WTC11 (cell line): ENCODE measurements at regions of chr3 and their contacts with region 1.

Region 1: DNA sequence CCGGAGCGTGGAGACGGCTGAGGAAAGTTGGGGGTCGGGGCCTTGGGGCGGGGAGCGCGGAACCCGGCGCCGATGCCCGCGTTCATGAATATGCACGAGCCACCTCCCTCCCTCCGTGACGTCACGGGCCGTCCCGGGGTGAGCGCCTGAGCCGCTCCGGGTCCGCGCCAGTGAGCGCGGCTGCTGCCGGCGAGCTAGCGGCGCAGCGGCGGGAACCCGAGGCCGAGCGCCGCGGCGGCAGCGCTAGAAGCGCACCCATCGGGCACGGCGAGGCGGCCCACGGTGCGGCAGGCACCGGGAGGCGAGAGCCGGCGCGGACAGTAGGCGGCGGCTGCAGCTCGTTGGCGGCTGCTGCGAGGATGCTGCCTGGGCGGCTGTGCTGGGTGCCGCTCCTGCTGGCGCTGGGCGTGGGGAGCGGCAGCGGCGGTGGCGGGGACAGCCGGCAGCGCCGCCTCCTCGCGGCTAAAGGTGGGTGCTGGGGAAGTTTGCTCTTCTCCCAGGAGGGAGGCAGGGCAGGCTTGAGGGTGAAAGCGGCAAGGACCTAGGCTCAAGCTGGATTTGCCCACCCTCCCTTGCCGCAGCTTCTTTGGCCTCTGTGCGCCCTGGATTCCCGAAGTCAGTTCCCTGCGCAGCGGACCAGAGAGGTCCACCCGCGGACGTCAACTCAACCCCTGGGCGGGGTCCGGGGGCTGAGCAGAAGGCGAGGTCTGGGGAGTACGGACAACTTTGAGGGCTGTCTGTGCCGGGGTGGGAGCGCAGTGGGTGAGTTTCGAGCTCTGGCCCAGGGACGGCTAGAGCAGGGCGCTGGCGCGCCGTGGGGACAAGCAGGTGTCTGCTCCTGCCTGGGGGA is at the start of gene CLSTN2:
- DNase-seq: peak; percentile 76
- ATAC-seq: peak; percentile 67
- H3K4me3 Mint-ChIP-seq: peak within 1 kb of the TSS; percentile 72
- H3K27ac Mint-ChIP-seq: no peak within 1 kb of the TSS
- H3K4me1 Mint-ChIP-seq: peaks cover 8% of the 10 kb centered on the region
- H3K27me3 Mint-ChIP-seq: peaks cover 53% of the 10 kb centered on the region
- CTCF ChIP-seq: no peak
- total RNA-seq, gene CLSTN2: 0.32 to 0.46 TPM (median 0.35 TPM) in 3 replicates

Region 2: DNA sequence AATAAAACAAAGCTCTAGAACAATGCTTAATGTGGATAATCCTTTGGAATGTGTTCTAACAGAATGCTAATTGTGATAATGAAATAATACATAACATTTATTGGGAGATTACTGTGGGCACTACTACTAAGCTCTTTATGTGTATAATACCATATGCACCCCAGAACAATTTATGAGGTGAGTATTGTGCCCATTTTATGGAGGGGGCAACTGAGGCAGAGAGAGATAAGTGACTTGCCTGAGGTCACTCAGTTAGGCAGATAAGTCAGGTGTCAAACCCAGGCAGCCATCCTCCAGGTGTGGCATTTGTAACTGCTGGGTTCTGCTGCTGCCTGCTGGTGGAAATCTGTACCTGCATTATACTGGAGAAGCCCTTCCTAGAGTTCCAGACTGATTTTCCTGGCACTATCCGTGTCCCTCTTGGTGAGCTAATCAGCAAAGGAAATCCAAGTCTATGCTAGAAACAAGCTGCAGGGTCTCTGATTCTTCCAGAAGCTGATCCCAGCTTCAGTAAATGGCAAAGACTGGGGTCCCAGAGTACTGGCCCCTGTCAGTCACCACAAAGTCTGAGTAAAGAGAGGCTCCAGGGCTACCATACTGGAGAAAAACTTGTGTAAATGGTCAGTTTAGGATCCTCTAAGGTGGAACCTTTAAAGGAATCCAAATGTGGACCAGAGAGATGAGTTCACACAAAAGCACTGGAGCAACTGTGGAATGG is 373.1 kb before region 1 on chr3:
- CTCF ChIA-PET with region 1: interaction called, 15 read pairs
- POLR2A ChIA-PET with region 1: no interaction called
- DNase-seq: peak; percentile 72
- ATAC-seq: peak; percentile 83
- H3K4me3 Mint-ChIP-seq: no peak overlapping the region
- H3K27ac Mint-ChIP-seq: no peak overlapping the region
- H3K4me1 Mint-ChIP-seq: peaks cover 8% of the 10 kb centered on the region
- H3K27me3 Mint-ChIP-seq: no peaks in the 10 kb centered on the region
- CTCF ChIP-seq: peak; percentile 74

Region 3: GRCh38 chr3:139718415-139718814 is 216.8 kb before region 1 on chr3:
- CTCF ChIA-PET with region 1: interaction called, 31 read pairs
- POLR2A ChIA-PET with region 1: interaction called, 3 read pairs
- DNase-seq: peak; percentile 60
- ATAC-seq: peak; percentile 85
- H3K4me3 Mint-ChIP-seq: no peak overlapping the region
- H3K27ac Mint-ChIP-seq: no peak overlapping the region
- H3K4me1 Mint-ChIP-seq: peaks cover 31% of the 10 kb centered on the region
- H3K27me3 Mint-ChIP-seq: no peaks in the 10 kb centered on the region; the same call in 1 of the 2 replicates
- CTCF ChIP-seq: peak; percentile 29; the same call in 1 of the 2 replicates

Region 4: DNA sequence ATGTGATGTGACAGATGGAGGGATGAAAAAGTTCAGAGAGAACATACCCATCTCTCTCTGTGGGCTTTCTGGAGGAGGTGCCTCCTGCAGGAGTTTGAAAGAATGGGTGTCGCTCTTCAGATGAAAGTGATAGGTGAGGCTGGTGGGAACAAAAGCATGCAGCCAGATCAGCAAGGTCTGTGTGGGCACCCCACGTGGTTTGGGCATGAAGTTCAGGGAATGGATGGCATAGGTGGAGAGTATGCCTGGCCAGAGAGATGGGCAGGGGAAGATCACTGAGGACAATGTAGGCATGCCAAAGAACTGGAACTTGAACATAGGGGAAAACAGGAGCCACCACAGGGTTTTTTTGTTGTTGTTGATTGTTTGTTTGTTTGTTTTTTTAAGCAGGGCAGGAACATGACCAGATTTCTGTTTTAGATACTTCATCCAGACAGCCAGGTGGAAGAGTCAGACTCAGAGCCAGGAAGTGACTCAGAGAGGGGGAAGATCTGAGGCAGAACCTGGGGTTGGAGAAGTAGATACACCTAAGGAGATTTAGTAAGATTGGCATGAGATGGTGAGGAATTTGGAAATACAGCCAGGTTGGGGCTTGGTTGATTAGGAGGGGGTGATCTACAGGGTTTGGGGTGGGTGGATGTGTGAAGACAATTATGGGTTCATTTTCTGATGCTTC is 65.1 kb before region 1 on chr3:
- CTCF ChIA-PET with region 1: no interaction called
- POLR2A ChIA-PET with region 1: no interaction called
- DNase-seq: no peak
- ATAC-seq: no peak
- H3K4me3 Mint-ChIP-seq: no peak overlapping the region
- H3K27ac Mint-ChIP-seq: no peak overlapping the region
- H3K4me1 Mint-ChIP-seq: no peaks in the 10 kb centered on the region
- H3K27me3 Mint-ChIP-seq: no peaks in the 10 kb centered on the region
- CTCF ChIP-seq: no peak

Region 5: GRCh38 chr3:139916316-139917057 is 18.8 kb before region 1 on chr3:
- CTCF ChIA-PET with region 1: interaction called, 11 read pairs
- POLR2A ChIA-PET with region 1: no interaction called
- DNase-seq: no peak
- ATAC-seq: no peak
- H3K4me3 Mint-ChIP-seq: no peak overlapping the region
- H3K27ac Mint-ChIP-seq: no peak overlapping the region
- H3K4me1 Mint-ChIP-seq: no peaks in the 10 kb centered on the region
- H3K27me3 Mint-ChIP-seq: no peaks in the 10 kb centered on the region; the same call in 1 of the 2 replicates
- CTCF ChIP-seq: no peak

Region 6: GRCh38 chr3:139953131-139953910 is 18.1 kb after region 1 on chr3:
- CTCF ChIA-PET with region 1: interaction called, 10 read pairs
- POLR2A ChIA-PET with region 1: interaction called, 6 read pairs
- DNase-seq: no peak
- ATAC-seq: no peak
- H3K4me3 Mint-ChIP-seq: no peak overlapping the region
- H3K27ac Mint-ChIP-seq: no peak overlapping the region
- H3K4me1 Mint-ChIP-seq: peaks cover 17% of the 10 kb centered on the region
- H3K27me3 Mint-ChIP-seq: no peaks in the 10 kb centered on the region
- CTCF ChIP-seq: no peak

Region 7: GRCh38 chr3:139994891-139995290 is 59.6 kb after region 1 on chr3:
- CTCF ChIA-PET with region 1: no interaction called
- POLR2A ChIA-PET with region 1: no interaction called
- DNase-seq: no peak
- ATAC-seq: no peak
- H3K4me3 Mint-ChIP-seq: no peak overlapping the region
- H3K27ac Mint-ChIP-seq: no peak overlapping the region
- H3K4me1 Mint-ChIP-seq: no peaks in the 10 kb centered on the region
- H3K27me3 Mint-ChIP-seq: peaks cover 3% of the 10 kb centered on the region; the same call in 1 of the 2 replicates
- CTCF ChIP-seq: no peak